MCF 10A (cell line): ENCODE measurements at regions of chr18 and their contacts with region 1.

Region 1: DNA sequence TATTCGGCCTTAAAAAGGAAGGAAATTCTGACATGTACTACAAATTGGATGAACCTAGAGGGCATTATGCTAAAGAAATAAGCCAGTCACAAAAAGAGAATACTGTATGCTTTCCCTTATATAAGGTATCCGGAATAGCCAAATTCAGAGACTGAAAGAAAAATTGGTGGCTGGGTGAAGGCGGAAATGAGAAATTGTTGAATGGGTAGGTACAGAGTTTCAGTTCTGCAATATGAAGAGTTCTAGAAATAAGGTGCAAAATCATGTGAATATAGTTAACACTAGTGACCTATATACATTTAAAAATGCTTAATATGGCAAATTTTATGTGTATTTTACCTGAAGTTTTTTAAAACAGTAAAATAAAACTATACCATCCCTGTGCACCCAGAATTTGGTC is 43.1 kb downstream of the RMP24 start:
- DNase-seq: no peak
- H3K4me3 Mint-ChIP-seq: no peak overlapping the region
- H3K27ac Mint-ChIP-seq: no peak overlapping the region
- H3K4me1 Mint-ChIP-seq: peaks cover 4% of the 10 kb centered on the region
- H3K27me3 Mint-ChIP-seq: no peaks in the 10 kb centered on the region
- CTCF ChIP-seq: no peak

Region 2: GRCh38 chr18:36031407-36031806 is 15.8 kb after region 1 on chr18:
- CTCF ChIA-PET with region 1: interaction called, 20 read pairs
- POLR2A ChIA-PET with region 1: interaction called, 7 read pairs
- intact Hi-C with region 1: no loop called
- DNase-seq: no peak
- H3K4me3 Mint-ChIP-seq: no peak overlapping the region
- H3K27ac Mint-ChIP-seq: no peak overlapping the region
- H3K4me1 Mint-ChIP-seq: peaks cover 31% of the 10 kb centered on the region
- H3K27me3 Mint-ChIP-seq: no peaks in the 10 kb centered on the region
- CTCF ChIP-seq: no peak

Region 3: DNA sequence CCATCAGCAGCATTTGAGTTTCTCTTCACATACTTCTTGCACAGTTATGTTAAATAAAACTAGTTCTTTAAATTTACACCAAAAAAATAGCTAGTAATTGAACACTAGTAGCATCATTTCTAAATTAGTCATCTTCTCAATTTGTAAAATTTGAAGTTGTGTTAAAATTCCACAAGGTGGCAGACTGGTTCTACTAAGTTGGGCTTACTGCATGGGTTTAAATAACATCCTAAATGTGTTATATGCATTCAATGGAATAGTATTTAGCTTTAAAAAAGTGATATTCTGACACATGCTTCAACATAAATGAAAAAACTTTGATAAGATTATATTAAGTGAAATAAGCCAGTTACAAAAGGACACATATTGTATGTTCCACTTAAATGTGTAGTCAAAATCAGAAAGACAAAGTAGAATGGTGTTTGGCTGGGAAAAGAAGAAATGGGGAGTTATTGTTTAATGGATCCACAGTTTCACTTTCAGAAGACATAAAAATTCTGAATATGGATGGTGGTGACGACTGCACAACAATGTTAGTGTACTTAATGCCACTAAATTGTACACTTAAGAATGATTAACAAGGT is 80.4 kb after region 1 on chr18:
- CTCF ChIA-PET with region 1: interaction called, 11 read pairs
- POLR2A ChIA-PET with region 1: no interaction called
- intact Hi-C with region 1: loop called (anchors 1 kb)
- DNase-seq: peak; percentile 64
- H3K4me3 Mint-ChIP-seq: no peak overlapping the region
- H3K27ac Mint-ChIP-seq: no peak overlapping the region
- H3K4me1 Mint-ChIP-seq: no peaks in the 10 kb centered on the region
- H3K27me3 Mint-ChIP-seq: no peaks in the 10 kb centered on the region
- CTCF ChIP-seq: peak; percentile 59

Region 4: GRCh38 chr18:36284671-36285295 is 269.2 kb after region 1 on chr18:
- CTCF ChIA-PET with region 1: interaction called, 8 read pairs
- POLR2A ChIA-PET with region 1: no interaction called
- intact Hi-C with region 1: loop called (anchors 2 kb)
- DNase-seq: peak; percentile 75
- H3K4me3 Mint-ChIP-seq: no peak overlapping the region
- H3K27ac Mint-ChIP-seq: no peak overlapping the region
- H3K4me1 Mint-ChIP-seq: no peaks in the 10 kb centered on the region
- H3K27me3 Mint-ChIP-seq: no peaks in the 10 kb centered on the region
- CTCF ChIP-seq: peak; percentile 67